ENCODE measurements at regions of chr2 and their contacts with region 1.

Region 1: DNA sequence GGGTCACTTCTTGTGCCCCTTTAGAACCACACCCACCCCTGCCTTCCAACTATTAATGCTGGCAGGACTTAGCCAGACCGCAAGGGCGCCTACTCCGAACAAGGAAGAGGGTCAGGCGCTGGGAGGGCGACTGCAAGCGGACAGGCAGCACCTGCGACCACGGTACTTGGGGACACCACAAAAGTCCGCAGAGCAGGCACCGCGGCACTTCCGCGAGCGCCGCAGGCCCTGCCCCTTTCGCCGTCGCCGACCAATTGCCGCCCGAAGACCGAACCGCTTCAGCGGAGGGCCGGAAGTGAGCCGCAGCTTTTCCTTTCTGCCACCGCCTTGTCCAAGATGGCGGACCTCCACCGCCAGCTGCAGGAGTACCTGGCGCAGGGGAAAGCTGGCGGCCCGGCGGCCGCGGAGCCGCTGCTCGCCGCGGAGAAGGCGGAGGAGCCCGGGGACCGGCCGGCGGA is at the start of gene SFT2D3:
- H3K4me3 Mint-ChIP-seq: peak within 1 kb of the TSS; percentile 86
- H3K27ac Mint-ChIP-seq: peak within 1 kb of the TSS; percentile 99
- H3K4me1 Mint-ChIP-seq: peaks cover 52% of the 10 kb centered on the region
- H3K27me3 Mint-ChIP-seq: no peaks in the 10 kb centered on the region

Region 2: DNA sequence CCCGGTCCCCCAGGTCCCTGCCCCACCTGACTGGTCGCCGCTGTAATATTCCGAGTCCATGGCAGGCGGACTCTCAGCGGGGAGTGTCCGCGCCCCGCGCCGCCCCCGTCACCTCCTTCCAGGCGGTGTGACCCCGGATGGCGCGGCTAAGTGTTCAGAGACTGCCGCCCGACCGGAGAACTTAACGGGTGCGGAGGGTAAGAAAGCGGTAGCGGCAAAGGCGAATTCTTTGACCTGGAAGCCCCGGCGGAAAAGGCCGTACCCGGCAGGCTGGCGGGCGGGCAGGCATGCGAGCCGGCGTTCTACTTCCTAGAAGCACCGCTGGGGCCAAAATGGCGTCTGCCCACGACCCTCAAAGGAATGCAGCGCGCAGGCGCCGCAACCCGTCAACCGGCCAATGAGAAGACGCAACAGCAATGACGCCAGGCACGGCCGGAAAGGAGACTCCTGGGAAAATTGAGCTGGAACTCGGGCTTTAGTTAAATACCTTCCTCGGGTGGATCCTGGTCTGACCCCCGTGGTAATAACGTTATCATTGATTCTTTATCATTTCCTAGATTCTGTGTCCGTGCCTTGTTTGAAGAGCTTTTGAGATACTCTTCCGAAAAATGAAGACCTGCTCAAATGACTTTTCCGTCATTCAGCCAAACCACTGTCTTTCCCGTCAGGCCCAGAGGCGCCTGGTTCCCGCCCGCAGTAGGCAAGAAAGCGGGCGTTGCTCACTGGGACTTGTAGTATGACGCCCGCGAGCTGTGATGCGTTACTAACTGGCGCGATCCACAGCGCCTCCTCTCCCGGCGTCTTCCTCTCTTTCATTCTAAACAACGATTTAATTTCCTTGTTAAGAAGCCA is 174.8 kb before region 1 on chr2 and contains the start of gene IWS1:
- intact Hi-C with region 1: loop called (anchors 2 kb)
- H3K4me3 Mint-ChIP-seq: peak within 1 kb of the TSS; percentile 95
- H3K27ac Mint-ChIP-seq: peak within 1 kb of the TSS; percentile 99
- H3K4me1 Mint-ChIP-seq: peaks cover 34% of the 10 kb centered on the region
- H3K27me3 Mint-ChIP-seq: no peaks in the 10 kb centered on the region

Region 3: DNA sequence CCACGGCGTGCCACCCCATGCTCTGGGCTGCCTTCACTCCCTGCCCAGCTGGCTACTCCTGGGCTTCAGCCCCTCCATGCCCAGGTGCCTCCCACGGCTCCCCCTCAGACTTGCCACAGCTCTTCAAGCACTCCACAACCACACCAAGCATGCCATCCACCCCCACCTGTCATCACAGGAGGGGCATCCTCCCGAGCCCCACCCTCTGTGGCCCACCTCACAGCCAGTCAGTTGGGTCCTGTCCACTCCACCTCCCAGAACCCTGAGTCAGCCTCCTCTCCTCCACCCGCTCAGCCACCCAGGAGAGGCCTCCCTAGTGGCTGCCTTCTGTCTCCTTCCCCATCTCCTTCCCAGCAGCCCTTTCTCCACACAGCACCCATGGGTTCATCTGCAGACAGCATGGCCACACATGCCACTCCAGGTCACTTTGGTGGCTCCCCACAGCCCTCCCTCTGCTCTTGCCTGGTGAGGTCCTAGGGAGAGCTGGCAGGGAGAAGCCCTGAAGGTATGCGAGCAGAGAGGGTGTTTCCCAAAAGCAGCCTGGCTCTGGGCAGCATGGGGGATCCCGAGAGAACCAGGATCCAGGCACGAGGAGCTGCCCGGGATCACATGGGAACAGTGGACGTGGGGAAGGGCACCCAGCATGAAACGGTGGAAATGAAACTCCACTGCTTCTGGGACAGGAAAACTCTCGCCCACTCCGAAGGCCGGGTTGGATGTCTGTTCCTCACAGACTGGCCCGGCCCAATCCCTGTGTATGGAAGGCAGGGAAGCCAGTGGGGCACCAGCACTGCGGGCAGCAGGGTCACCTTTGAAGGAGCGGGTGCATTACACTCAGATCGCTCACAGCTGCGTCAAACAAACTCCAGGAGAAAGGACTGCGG is 28.6 kb before region 1 on chr2:
- intact Hi-C with region 1: loop called (anchors 2 kb)
- H3K4me3 Mint-ChIP-seq: peak overlapping the region; percentile 19
- H3K27ac Mint-ChIP-seq: peak overlapping the region; percentile 16
- H3K4me1 Mint-ChIP-seq: peaks cover 26% of the 10 kb centered on the region
- H3K27me3 Mint-ChIP-seq: peaks cover 82% of the 10 kb centered on the region

Region 4: GRCh38 chr2:127810619-127811396 is 109.6 kb after region 1 on chr2 and contains the start of gene WDR33:
- intact Hi-C with region 1: loop called (anchors 5 kb)
- H3K4me3 Mint-ChIP-seq: peak within 1 kb of the TSS; percentile 91
- H3K27ac Mint-ChIP-seq: peak within 1 kb of the TSS; percentile 97
- H3K4me1 Mint-ChIP-seq: peaks cover 34% of the 10 kb centered on the region
- H3K27me3 Mint-ChIP-seq: no peaks in the 10 kb centered on the region

Measured in dendritic cell treated with granulocyte-macrophage colony-stimulating factor and Interleukin-4, amounts not matched to agents 40 ng/mL and 50 ng/mL, for 4 days (primary cell).